Mammary epithelial cell (primary cell): ENCODE measurements at regions of chr3 and their contacts with region 1.

Region 1: DNA sequence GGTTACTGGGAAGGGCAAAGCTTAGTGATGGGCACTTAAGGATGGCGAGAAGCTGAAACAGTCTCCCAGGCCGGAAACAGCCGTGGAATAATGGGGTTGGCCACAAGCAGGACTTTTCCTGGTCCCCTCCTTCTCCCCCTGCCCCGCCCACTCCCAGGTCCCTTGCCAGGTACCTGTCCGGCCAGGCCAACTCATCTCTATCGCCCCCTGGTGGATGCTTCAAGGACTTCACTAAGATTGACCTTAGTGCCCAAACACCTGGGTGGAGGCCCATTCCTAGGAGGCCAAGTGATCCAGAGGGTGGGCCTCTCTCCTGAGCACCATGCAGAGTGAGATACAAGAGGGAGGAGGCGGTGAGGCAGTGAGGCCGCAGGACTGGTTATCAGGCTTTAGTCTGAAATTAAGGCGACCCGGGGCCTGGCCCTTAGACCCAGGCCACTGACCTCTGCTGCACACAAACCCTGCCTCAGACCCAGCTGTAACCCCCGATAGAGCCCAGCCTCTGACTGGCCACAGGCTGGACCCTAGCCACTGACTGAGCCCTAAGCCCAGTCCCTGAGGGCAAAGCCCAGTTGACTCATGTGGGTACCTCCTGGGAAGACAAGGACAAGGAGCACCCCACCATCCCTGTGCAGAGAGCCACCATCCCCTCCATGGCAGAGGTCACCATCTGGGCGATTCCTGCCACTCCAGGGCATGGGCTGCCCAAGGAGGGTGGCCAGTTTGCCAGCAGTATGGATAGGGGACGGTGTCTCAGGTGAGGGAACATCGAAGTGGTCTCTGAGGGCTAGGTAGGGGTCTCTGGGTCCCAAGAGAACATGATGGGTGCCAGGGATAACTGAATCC is 37.6 kb downstream of the VIPR1 start:
- DNase-seq: peak; percentile 24
- H3K4me3 ChIP-seq: no peak overlapping the region
- H3K27ac ChIP-seq: no peak overlapping the region
- H3K4me1 ChIP-seq: no peaks in the 10 kb centered on the region
- H3K27me3 ChIP-seq: no peaks in the 10 kb centered on the region
- CTCF ChIP-seq: peak; percentile 60 to 87

Region 2: DNA sequence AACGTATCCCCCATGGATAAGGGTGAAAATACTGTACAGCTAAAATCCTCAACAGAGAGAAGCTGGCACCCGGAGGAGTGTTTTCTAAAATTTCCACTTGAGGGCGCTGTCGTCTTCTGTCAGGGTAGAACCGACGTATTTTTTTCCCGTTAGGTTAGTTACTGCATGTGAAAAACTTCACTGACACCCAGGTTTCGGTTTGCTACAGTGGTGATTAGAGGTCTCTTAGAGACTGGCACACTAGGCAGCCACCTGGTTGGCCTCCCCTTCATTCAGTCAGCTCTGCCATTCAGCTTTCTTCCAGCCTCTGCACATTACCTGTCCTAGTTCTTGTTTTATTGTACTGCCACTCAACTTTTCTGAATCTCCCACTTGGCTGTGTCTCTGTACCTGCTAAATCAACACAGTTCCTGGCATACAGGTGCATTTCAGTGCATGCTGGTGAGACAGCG is 292.5 kb before region 1 on chr3:
- CTCF ChIA-PET with region 1: no interaction called
- dilution Hi-C with region 1: no loop called
- in situ Hi-C with region 1: loop called (anchors 5 to 25 kb)
- intact Hi-C with region 1: loop called (anchors 2 kb)
- DNase-seq: peak; percentile 50
- H3K4me3 ChIP-seq: no peak overlapping the region
- H3K27ac ChIP-seq: no peak overlapping the region
- H3K4me1 ChIP-seq: peaks cover 6% of the 10 kb centered on the region
- H3K27me3 ChIP-seq: no peaks in the 10 kb centered on the region
- CTCF ChIP-seq: peak; percentile 70 to 74

Region 3: DNA sequence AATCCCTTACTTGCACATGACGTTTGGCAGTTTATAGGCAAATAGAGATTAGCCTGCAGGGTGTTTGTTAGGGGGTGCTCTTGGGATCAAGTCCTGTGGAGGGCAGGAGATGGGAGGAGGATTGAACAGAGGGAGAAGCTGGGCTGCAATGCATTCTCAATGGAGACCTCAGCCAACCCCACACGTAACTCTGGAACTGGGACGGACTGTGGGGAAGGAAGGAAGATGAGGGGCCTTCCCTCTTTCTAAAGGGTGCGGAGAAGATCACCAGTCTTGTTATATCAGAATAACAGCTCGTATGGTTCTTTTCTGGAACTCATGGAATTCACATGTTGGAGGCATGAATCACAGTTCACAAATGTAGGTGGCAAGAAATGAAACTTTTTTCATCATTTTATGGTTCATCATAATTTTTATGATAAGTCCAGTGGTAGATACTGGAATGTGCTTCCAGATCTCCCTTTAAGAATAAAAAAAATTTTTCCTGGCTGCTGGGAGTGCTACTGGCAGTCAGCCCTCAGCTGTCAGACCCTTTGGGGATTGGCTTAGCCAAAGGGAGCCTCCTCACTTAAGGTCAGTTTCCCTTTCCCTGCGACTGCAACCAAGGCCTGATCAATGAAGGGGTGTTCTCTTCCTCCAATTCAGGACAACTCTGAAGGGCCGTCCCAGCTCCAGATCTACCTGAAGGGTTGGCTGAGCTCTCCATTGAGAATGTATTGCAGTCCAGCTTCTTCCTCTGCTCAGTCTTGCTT is 109.1 kb before region 1 on chr3:
- CTCF ChIA-PET with region 1: no interaction called
- dilution Hi-C with region 1: no loop called
- in situ Hi-C with region 1: no loop called
- intact Hi-C with region 1: no loop called
- DNase-seq: no peak
- H3K4me3 ChIP-seq: no peak overlapping the region
- H3K27ac ChIP-seq: no peak overlapping the region
- H3K4me1 ChIP-seq: no peaks in the 10 kb centered on the region
- H3K27me3 ChIP-seq: peaks cover 5% of the 10 kb centered on the region
- CTCF ChIP-seq: no peak

Region 4: GRCh38 chr3:42451546-42452230 is 88.4 kb before region 1 on chr3:
- CTCF ChIA-PET with region 1: no interaction called
- dilution Hi-C with region 1: no loop called
- in situ Hi-C with region 1: no loop called
- intact Hi-C with region 1: no loop called
- DNase-seq: no peak
- H3K4me3 ChIP-seq: no peak overlapping the region
- H3K27ac ChIP-seq: no peak overlapping the region
- H3K4me1 ChIP-seq: peaks cover 10% of the 10 kb centered on the region
- H3K27me3 ChIP-seq: no peaks in the 10 kb centered on the region
- CTCF ChIP-seq: no peak

Region 5: GRCh38 chr3:42502429-42503250 is 37.5 kb before region 1 on chr3 and contains the start of gene VIPR1:
- CTCF ChIA-PET with region 1: no interaction called
- dilution Hi-C with region 1: no loop called
- in situ Hi-C with region 1: loop called (anchors 5 kb)
- intact Hi-C with region 1: loop called (anchors 1 kb)
- DNase-seq: peak; percentile 80
- H3K4me3 ChIP-seq: peak within 1 kb of the TSS; percentile 34 to 68 (median 46)
- H3K27ac ChIP-seq: no peak within 1 kb of the TSS
- H3K4me1 ChIP-seq: peaks cover 14% of the 10 kb centered on the region
- H3K27me3 ChIP-seq: no peaks in the 10 kb centered on the region
- CTCF ChIP-seq: no peak
- total RNA-seq, gene VIPR1: 4.7 to 21.3 TPM

Region 6: GRCh38 chr3:42515391-42515916 is 24.6 kb before region 1 on chr3:
- CTCF ChIA-PET with region 1: interaction called, 4 read pairs
- dilution Hi-C with region 1: no loop called
- in situ Hi-C with region 1: no loop called
- intact Hi-C with region 1: loop called (anchors 2 kb)
- DNase-seq: peak; percentile 96
- H3K4me3 ChIP-seq: peak overlapping the region in 1 of 3 experiments; percentile 14
- H3K27ac ChIP-seq: peak overlapping the region; percentile 48
- H3K4me1 ChIP-seq: peaks cover 25% of the 10 kb centered on the region
- H3K27me3 ChIP-seq: no peaks in the 10 kb centered on the region
- CTCF ChIP-seq: no peak